RWPE1 (cell line): ENCODE measurements at regions of chr6 and their contacts with region 1.

Region 1: DNA sequence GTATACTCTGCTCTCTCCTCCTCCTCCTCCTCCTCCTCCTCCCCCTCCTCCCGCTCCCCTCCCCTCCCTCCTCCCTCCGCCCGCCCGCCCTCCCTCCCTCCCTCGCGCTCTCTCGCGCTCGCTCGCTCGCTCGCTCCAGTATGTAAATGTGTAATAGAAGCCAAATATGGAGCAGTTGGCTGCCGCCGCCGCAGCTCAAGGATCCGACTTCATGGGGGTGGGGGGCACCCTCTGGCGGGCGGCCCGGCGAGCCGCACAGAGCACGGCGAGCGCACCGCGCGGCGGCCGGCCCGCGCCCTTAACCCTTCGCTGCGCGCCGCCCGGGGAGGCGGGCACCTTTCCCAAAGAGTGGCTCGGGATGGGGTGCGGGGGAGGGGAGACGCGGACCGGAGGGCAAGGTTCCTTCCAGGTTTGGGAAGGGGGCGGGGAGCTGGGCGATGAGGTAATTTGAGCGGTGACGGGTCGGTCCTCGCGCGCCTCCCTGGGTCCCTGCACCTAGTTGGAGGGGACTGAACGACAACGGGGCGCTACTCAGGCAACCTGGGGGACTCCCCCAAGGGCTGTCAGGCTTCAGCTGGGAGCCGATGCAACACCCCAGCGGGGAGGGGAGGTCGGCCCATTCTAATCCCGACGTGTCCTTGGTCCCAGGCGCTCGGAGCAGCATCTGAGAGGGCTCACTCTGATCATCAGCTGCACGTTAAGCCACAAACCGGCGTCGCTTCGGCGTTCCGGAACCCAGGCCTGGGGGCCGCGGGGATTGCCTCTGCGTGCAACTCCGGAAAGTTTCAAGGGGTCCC is 409 bp upstream of the ATXN1 start:
- DNase-seq: peak; percentile 79
- H3K27ac ChIP-seq: peak overlapping the region; percentile 93
- CTCF ChIP-seq: peak; percentile 28

Region 2: GRCh38 chr6:16687045-16687444 is 74.6 kb before region 1 on chr6:
- CTCF ChIA-PET with region 1: no interaction called
- POLR2A ChIA-PET with region 1: no interaction called
- DNase-seq: no peak
- H3K27ac ChIP-seq: no peak overlapping the region
- CTCF ChIP-seq: no peak

Region 3: GRCh38 chr6:16741112-16742016 is 20.3 kb before region 1 on chr6:
- CTCF ChIA-PET with region 1: interaction called, 28 read pairs
- POLR2A ChIA-PET with region 1: interaction called, 4 read pairs
- DNase-seq: peak; percentile 55
- H3K27ac ChIP-seq: no peak overlapping the region
- CTCF ChIP-seq: no peak

Region 4: DNA sequence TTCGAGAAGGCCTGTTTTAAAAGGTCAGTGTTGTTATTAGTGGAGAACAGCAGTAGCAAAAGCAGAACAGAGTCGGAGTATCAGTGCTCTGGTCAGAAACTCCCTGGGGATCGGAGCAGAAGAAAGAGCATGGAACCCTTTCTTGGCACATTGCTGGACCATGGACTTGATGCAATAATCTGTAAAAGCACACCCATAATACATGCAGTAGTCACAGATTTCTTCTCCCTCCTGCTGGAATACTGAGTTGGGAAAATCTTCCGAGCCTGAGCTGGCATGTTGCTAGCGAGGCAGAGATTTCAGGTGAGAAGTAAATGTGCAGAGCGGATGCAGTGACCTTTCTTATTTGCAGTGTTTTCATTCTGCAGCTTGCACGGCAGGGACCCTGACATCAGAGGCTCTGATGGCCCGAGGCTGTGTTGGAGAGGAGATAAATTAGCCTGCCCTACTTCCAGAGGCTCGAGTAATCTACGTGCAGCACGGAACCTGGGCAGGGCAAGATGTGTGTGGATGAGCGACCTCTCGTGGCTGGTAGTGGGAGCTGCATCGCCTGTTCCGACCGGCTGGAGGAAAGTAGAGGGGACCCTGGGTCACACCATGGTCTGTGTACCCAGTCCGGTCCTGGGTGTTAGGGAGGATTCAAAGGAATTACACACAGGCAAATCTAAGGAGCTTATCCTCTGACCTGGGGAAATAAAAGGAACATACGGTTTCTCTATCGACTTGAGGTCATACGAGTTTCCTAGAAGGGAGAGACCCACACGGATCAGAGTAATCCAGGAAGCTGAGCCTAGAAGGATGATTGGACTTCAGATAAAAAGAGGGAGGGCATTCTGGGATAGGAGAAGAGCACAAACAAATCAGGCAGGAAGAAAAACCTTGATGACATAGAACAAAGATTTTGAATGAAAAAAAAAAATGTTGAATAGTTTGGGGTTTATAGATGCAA is 203.2 kb after region 1 on chr6:
- CTCF ChIA-PET with region 1: interaction called, 20 read pairs
- POLR2A ChIA-PET with region 1: no interaction called
- DNase-seq: peak; percentile 63
- H3K27ac ChIP-seq: no peak overlapping the region
- CTCF ChIP-seq: peak; percentile 90